ENCODE measurements at regions of chr10 and their contacts with region 1.

Region 1: DNA sequence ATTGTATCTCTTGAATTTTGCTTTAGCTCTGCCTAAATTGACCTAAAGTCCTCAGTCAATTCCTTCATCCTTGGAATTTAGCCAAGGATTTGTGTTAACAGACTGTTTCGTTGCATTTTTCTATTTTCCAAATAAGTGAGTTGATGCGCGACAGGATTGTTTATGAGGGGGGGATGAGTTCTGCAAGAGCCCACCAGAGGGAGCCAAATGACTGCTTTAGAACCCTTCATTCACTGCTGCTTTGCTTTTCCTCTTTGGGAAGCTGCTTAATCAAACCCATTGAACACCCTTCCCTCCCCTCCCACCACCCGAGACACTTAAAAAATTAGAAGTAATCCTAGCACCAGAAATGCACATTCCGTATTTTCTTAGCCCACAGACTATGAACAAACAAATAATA is 33.7 kb upstream of the PTF1A start:
- DNase-seq: no peak
- ATAC-seq: peak in 3 of 4 donors; percentile 70 to 80 (median 74)
- H3K4me3 ChIP-seq: no peak overlapping the region
- H3K27ac ChIP-seq: no peak overlapping the region
- H3K4me1 ChIP-seq: peaks cover 0 to 5% (median 0%) of the 10 kb centered on the region in 12 donors
- H3K27me3 ChIP-seq: peaks cover 0 to 26% (median 5%) of the 10 kb centered on the region in 9 donors
- CTCF ChIP-seq: peak; percentile 62 to 83 (median 74)
- POLR2A ChIP-seq: no peak

Region 2: DNA sequence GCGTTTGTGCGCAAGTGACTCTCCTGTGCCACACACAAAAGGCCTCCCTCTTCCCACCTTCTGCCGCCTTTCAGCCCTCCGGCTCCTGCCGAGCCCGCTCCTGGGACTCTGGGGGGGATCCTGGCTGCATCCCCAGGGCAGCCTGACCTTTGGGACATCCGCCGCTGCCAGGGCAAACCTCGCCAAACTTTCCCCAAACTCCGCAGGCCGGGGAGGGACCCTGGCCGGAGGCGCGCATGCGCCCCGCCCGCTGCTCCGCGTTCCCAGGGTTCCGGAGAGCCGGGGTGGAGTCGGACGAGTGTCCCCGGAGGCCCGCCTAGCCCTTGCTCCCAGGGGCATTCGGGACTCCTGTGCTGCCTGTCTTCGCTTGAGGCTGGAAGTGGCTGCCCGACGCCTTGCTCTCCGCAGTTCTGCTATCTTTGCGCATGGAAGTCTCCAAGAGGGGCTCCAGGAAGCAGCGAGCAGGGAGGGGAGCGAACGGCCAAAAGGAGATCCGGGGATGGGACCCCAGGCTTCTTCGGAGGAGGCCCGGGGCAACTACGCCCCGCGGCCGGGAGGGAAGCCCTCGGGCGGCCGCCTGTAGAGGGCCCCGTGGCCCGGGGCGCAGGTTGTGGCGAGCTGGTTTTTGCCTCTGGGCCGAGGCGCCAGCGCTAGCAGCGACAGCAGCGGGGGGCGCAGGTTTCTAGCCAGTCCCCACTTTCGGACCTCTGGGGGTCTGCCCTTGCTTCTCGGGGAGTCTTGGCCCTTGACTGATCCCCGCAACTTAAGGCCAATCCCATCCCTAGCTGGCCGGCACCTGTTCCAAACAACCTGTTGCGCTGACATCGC is 40.8 kb after region 1 on chr10:
- intact Hi-C with region 1: no loop called
- DNase-seq: no peak
- ATAC-seq: no peak
- H3K4me3 ChIP-seq: peak overlapping the region in 5 of 12 donors; percentile 1 to 18 (median 11)
- H3K27ac ChIP-seq: no peak overlapping the region
- H3K4me1 ChIP-seq: peaks cover 0 to 21% (median 5%) of the 10 kb centered on the region in 12 donors
- H3K27me3 ChIP-seq: peaks cover 23 to 99% (median 77%) of the 10 kb centered on the region in 9 donors
- CTCF ChIP-seq: no peak
- POLR2A ChIP-seq: no peak

Region 3: DNA sequence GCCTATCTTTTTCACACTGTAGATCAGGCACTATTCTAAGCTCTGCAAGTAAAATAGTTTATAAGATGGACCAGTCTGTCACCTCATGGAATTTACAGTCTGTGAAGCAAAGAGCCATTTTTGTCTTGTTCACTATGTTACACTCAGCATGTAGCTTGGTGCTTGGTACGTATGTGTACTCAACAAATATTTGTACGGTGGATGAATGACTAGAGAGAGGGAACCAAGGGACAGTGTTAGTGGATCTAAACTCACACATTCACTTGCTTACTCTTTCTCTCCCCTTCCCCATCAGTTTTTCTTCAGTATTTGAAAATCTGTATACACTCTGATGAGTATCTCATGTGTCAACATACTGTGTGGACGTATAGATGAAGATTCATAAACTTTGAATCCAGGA is 79.6 kb after region 1 on chr10:
- intact Hi-C with region 1: no loop called
- DNase-seq: no peak
- ATAC-seq: no peak
- H3K4me3 ChIP-seq: no peak overlapping the region
- H3K27ac ChIP-seq: no peak overlapping the region
- H3K4me1 ChIP-seq: no peaks in the 10 kb centered on the region
- H3K27me3 ChIP-seq: no peaks in the 10 kb centered on the region
- CTCF ChIP-seq: no peak
- POLR2A ChIP-seq: no peak

Region 4: GRCh38 chr10:23293145-23293724 is 134.9 kb after region 1 on chr10:
- intact Hi-C with region 1: loop called in 4 of 10 experiments (anchors 5 to 10 kb)
- DNase-seq: no peak
- ATAC-seq: no peak
- H3K4me3 ChIP-seq: no peak overlapping the region
- H3K27ac ChIP-seq: no peak overlapping the region
- H3K4me1 ChIP-seq: no peaks in the 10 kb centered on the region
- H3K27me3 ChIP-seq: peaks cover 0 to 19% (median 0%) of the 10 kb centered on the region in 9 donors
- CTCF ChIP-seq: peak in 6 of 12 donors; percentile 6 to 36 (median 32)
- POLR2A ChIP-seq: no peak

Region 5: GRCh38 chr10:23702977-23703414 is 544.6 kb after region 1 on chr10:
- intact Hi-C with region 1: loop called in 8 of 10 experiments (anchors 2 to 10 kb)
- DNase-seq: peak; percentile 27 to 62 (median 42)
- ATAC-seq: peak in 3 of 4 donors; percentile 58 to 83 (median 81)
- H3K4me3 ChIP-seq: no peak overlapping the region
- H3K27ac ChIP-seq: no peak overlapping the region
- H3K4me1 ChIP-seq: no peaks in the 10 kb centered on the region
- H3K27me3 ChIP-seq: peaks cover 0 to 15% (median 4%) of the 10 kb centered on the region in 9 donors
- CTCF ChIP-seq: peak; percentile 57 to 73 (median 63)
- POLR2A ChIP-seq: no peak

Region 6: DNA sequence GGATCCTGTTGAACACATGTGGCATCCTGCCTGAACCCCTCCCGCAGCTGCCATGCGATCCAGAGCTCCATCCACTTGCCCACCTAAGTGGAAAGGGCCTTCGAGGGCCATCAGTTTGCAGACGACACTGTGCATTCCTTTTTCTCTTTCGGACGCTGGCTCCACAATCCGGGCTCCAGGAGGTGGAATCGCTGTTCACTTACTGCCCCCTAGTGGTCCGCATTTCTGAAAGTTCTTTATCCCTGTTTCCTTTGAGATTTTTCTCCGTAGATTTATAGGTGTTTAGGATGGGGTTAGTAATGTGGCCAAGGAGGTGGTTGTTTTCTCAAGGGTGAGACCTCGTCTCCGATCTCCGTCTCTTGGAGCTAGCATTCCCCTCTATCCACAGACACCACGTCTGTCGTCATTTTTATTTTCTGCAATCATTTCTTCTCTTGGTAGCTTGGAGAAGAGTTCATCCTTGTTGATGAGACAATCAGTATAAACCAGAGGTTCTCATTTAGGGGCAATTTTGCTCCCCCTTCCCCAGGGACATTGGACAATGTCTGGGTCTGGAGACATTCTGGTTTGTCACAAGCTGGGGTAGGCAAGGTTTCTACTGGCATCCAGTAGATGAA is 1360.7 kb after region 1 on chr10:
- intact Hi-C with region 1: loop called in 1 of 10 experiments (anchors 5 kb)
- DNase-seq: peak in 4 of 5 donors; percentile 46 to 69 (median 60)
- ATAC-seq: peak; percentile 40 to 82 (median 66)
- H3K4me3 ChIP-seq: no peak overlapping the region
- H3K27ac ChIP-seq: no peak overlapping the region
- H3K4me1 ChIP-seq: peaks cover 0 to 10% (median 2%) of the 10 kb centered on the region in 12 donors
- H3K27me3 ChIP-seq: no peaks in the 10 kb centered on the region
- CTCF ChIP-seq: peak; percentile 62 to 84 (median 74)
- POLR2A ChIP-seq: no peak

Region 7: DNA sequence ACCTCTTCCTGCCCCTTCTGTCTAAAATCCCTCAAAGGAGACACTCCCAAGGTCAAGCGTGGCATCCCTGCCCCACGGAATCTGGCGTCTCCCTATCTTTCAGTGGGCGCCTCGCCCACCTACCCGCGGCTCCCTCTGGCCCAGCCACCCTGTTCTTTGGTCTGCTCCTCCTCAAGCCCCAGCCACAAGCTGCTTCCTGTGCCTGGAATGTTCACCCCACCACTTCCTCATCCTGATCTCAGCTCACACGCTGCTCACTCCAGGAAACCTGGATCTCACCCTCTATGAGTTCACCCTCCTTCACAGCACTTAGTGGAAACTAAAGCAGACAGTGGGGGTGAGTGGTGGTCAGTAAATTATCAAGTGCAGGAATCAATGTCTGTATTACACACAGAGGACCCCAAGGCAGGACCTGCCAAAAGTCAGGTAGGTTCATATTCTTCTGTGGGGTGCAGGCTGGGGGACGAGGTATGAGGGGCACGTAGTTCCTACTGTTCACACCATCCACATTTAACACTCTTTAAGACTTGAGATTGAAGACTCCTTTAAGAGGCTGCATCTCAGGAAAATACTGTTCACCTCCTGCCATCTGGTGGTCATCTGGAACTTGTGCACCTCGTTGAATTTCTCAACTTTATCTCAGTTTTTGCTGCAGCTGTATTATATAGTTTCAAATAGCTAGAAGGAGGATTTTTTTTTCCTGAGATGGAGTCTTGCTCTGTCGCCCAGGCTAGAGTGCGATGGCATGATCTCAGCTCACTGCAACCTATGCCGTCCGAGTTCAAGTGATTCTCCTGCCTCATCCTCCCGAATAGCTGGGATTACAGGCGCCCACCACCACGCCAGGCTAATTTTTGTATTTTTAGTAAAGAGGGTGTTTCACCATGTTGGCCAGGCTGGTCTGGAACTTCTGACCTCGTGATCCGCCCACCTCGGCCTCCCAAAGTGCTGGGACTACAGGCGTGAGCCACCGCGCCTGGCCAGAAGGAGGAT is 1398.7 kb after region 1 on chr10:
- intact Hi-C with region 1: loop called in 3 of 10 experiments (anchors 5 to 10 kb)
- DNase-seq: no peak
- ATAC-seq: peak in 3 of 4 donors; percentile 30 to 56 (median 56)
- H3K4me3 ChIP-seq: no peak overlapping the region
- H3K27ac ChIP-seq: no peak overlapping the region
- H3K4me1 ChIP-seq: peaks cover 0 to 11% (median 4%) of the 10 kb centered on the region in 12 donors
- H3K27me3 ChIP-seq: peaks cover 0 to 5% (median 0%) of the 10 kb centered on the region in 9 donors
- CTCF ChIP-seq: peak; percentile 46 to 80 (median 58)
- POLR2A ChIP-seq: no peak